Calu3 (cell line): ENCODE measurements at regions of chr22 and their contacts with region 1.

Region 1: GRCh38 chr22:40922484-40923303 is 28.5 kb upstream of the RBX1 start:
- DNase-seq: peak; percentile 28
- H3K4me3 Mint-ChIP-seq: no peak overlapping the region
- H3K27ac Mint-ChIP-seq: no peak overlapping the region
- H3K4me1 Mint-ChIP-seq: no peaks in the 10 kb centered on the region
- H3K27me3 Mint-ChIP-seq: no peaks in the 10 kb centered on the region
- CTCF ChIP-seq: peak; percentile 64

Region 2: DNA sequence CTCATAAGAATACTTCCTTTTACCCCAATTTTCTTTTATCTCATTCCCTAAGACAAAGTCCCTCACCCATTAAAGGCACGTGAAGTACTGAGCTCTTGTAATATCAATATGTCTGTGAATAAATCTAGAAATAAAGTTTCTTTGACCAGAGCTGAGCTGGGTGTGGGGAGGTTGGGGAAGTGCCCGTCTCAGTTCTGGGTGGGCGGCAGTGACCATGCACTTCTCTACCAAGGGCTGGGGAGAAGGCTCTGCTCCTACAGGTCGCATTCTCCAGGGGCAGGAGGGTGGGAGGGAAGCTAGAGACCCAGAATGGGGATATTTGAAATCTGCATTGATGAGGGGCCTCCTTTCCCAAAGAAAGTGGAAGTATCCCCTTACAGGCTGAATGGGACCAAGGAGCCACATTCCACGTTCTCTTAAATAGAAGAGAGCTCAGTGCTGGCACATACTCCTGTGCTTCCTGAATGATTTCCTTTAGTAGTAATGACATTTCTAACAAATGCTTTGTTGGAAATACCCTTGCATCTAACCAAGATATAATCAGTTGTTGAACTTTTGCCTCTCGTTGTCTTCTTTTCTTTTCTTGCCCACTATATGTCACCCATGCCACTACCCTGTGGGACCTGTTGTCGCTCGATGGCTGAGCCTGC is 44.5 kb after region 1 on chr22:
- CTCF ChIA-PET with region 1: no interaction called
- intact Hi-C with region 1: no loop called
- DNase-seq: no peak
- H3K4me3 Mint-ChIP-seq: no peak overlapping the region
- H3K27ac Mint-ChIP-seq: no peak overlapping the region
- H3K4me1 Mint-ChIP-seq: no peaks in the 10 kb centered on the region
- H3K27me3 Mint-ChIP-seq: no peaks in the 10 kb centered on the region
- CTCF ChIP-seq: no peak

Region 3: GRCh38 chr22:41204992-41205900 is 282.6 kb after region 1 on chr22 and contains the start of gene L3MBTL2:
- CTCF ChIA-PET with region 1: no interaction called
- intact Hi-C with region 1: no loop called
- DNase-seq: peak; percentile 99
- H3K4me3 Mint-ChIP-seq: peak within 1 kb of the TSS; percentile 93
- H3K27ac Mint-ChIP-seq: peak within 1 kb of the TSS; percentile 98
- H3K4me1 Mint-ChIP-seq: peaks cover 24% of the 10 kb centered on the region
- H3K27me3 Mint-ChIP-seq: peaks cover 17% of the 10 kb centered on the region
- CTCF ChIP-seq: no peak
- total RNA-seq, gene L3MBTL2: 27.0 and 28.2 TPM in 2 replicates

Region 4: GRCh38 chr22:41237707-41238569 is 315.2 kb after region 1 on chr22:
- CTCF ChIA-PET with region 1: interaction called, 51 read pairs
- intact Hi-C with region 1: loop called (anchors 5 kb)
- DNase-seq: peak; percentile 90
- H3K4me3 Mint-ChIP-seq: peak overlapping the region; percentile 70
- H3K27ac Mint-ChIP-seq: no peak overlapping the region
- H3K4me1 Mint-ChIP-seq: no peaks in the 10 kb centered on the region
- H3K27me3 Mint-ChIP-seq: no peaks in the 10 kb centered on the region
- CTCF ChIP-seq: no peak